ENCODE measurements at regions of chr2 and their contacts with region 1.

Region 1: DNA sequence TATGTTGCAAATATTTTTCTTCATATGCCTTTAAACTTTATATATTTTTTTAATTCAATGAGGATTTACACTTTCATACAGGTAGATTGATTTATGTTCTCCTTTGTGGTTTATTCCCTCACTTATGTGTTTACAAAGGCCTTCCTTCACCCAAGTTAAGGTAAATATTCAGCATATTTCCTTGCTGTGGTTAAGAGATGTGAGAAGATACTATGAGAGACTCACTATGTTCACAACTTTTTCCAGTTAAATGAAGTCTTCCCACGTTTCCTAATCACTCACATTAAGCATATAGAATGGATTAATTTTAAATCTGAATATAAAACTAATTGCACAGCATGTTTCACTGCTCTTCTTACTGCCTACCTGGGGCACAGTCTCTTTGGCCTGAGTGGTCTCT is 597 bp downstream of the PECR start:
- DNase-seq: no peak
- ATAC-seq: peak; percentile 1; the same call in 1 of the 2 replicates
- H3K4me3 ChIP-seq: peak overlapping the region; percentile 59 to 86
- H3K27ac ChIP-seq: peak overlapping the region; percentile 84
- H3K4me1 ChIP-seq: peaks cover 11% of the 10 kb centered on the region; the same call in 1 of the 2 replicates
- H3K27me3 ChIP-seq: no peaks in the 10 kb centered on the region
- CTCF ChIP-seq: no peak

Region 2: DNA sequence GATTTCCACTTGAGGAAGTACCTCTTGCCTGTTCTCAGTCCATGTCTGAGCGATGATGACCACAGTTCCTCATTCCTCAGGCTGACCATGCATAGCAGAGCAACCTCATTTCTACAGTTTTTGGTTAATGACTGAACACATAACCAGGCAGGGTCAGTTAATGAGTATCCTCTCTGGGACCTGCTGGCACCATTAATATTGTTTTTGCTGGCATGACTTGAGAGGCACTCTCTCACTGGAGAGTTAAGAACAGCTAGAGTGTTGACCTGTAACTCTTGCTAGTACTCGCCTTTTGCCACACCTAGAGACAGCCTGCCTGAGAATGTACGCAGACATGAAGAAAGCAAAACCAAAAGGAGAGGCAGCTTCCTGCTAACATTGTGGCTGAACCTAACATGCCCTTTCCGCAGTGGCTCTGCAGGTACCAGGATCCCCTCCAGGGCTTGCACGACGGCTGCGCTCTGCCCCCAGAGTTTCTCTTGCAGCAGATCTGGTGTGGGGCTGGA is 23.3 kb before region 1 on chr2:
- CTCF ChIA-PET with region 1: no interaction called
- POLR2A ChIA-PET with region 1: interaction called, 10 read pairs
- in situ Hi-C with region 1: no loop called
- intact Hi-C with region 1: no loop called
- DNase-seq: no peak
- ATAC-seq: peak; percentile 38; the same call in 1 of the 2 replicates
- H3K4me3 ChIP-seq: no peak overlapping the region
- H3K27ac ChIP-seq: no peak overlapping the region
- H3K4me1 ChIP-seq: no peaks in the 10 kb centered on the region
- H3K27me3 ChIP-seq: no peaks in the 10 kb centered on the region
- CTCF ChIP-seq: no peak